AG04449 (cell line): ENCODE measurements at regions of chr22 and their contacts with region 1.

Region 1: GRCh38 chr22:37472418-37473006 is 13.7 kb downstream of the MFNG start:
- DNase-seq: no peak
- H3K4me3 ChIP-seq: no peak overlapping the region
- CTCF ChIP-seq: peak; percentile 61

Region 2: DNA sequence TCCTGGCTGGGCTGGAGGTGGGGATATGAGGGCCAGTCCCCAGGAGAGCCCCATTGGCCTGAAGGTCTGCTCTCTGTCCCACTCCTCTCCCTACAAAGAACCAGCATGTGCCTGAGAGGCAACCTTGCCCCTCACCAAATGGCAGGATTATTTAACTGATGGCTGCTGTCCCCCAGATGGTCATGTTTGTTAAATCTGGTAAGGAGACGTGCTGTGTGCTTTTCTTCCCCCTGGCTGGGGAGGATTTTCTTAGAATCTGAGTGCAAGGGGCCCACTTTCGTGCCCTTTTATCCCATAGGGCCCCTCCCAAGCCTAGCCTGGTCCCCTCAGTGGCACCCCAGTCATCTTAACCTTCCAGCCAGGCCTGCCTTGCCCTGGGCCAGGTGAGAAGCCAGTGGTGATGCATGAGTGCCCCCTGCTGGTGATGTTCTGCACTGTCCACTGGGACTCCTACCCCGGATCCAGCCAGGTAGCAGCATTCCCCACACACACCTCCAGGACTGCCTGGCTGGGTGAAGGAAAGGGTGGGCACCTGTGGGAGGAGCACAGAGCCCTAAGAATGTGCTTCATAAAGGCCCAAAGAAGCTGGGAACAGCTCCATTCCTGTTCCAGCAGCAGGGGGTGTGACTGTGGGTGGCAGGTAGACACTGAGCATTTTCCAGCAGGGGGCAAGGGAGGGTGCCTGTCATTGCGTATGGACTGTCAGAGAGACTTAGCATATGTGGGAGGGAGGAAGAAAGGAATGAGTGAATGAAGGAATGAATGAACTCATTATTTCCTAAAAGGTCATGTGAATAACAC is 15.2 kb before region 1 on chr22:
- CTCF ChIA-PET with region 1: interaction called, 20 read pairs
- POLR2A ChIA-PET with region 1: no interaction called
- DNase-seq: no peak
- H3K4me3 ChIP-seq: no peak overlapping the region
- CTCF ChIP-seq: peak; percentile 90

Region 3: GRCh38 chr22:37486224-37486845 is 13.8 kb after region 1 on chr22 and contains the start of gene MFNG:
- CTCF ChIA-PET with region 1: interaction called, 14 read pairs
- POLR2A ChIA-PET with region 1: no interaction called
- DNase-seq: no peak
- H3K4me3 ChIP-seq: no peak within 1 kb of the TSS
- CTCF ChIP-seq: no peak

Region 4: GRCh38 chr22:38203090-38203810 is 730.7 kb after region 1 on chr22:
- CTCF ChIA-PET with region 1: no interaction called
- POLR2A ChIA-PET with region 1: no interaction called
- DNase-seq: no peak
- H3K4me3 ChIP-seq: peak overlapping the region; percentile 83
- CTCF ChIP-seq: no peak